WTC11 (cell line): ENCODE measurements at regions of chr3 and their contacts with region 1.

Region 1: DNA sequence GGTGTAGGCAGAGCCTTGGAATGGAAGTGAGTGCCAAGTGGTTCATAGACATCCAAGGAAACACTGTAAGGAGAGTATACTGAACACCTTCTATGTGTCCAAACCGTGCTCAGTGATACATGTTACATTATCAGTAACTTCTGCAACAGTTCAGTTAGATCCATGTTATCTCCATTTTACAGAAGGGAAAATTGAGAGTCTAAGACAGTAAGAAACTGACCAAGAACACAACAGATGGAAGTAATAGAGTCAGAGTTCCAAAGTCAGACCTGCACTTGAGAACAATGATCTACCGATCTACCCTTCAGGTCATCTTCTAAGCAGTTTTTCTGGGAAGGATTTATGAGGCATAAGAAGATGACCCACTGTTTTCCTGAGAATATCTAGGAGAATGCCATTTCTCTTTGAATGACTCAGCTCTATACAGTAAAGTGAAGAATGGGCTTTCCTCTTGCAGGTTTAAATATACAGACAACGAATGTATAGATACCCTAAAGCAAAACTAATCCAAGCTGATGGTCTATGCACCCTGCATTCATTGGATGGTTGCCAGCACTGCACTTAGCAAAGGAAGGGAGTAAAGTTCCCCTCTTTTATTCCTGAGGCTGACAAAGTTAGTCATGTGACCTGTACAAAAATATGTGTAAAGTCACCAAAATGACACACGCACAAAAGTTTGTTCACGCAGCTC is 604.1 kb upstream of the MDFIC2 start:
- DNase-seq: no peak
- ATAC-seq: no peak
- H3K4me3 Mint-ChIP-seq: no peak overlapping the region
- H3K27ac Mint-ChIP-seq: no peak overlapping the region
- H3K4me1 Mint-ChIP-seq: peaks cover 6% of the 10 kb centered on the region
- H3K27me3 Mint-ChIP-seq: no peaks in the 10 kb centered on the region
- CTCF ChIP-seq: no peak

Region 2: GRCh38 chr3:70905491-70905890 is 11.0 kb before region 1 on chr3:
- CTCF ChIA-PET with region 1: no interaction called
- POLR2A ChIA-PET with region 1: interaction called, 13 read pairs
- DNase-seq: no peak
- ATAC-seq: no peak
- H3K4me3 Mint-ChIP-seq: no peak overlapping the region
- H3K27ac Mint-ChIP-seq: no peak overlapping the region
- H3K4me1 Mint-ChIP-seq: no peaks in the 10 kb centered on the region
- H3K27me3 Mint-ChIP-seq: no peaks in the 10 kb centered on the region; the same call in 1 of the 2 replicates
- CTCF ChIP-seq: no peak